Heart right ventricle (tissue), 16 donors: ENCODE measurements at regions of chr10 and their contacts with region 1.

Region 1: GRCh38 chr10:24396398-24396797 is 187.5 kb downstream of the KIAA1217 start:
- DNase-seq: no peak
- ATAC-seq: no peak
- H3K4me3 ChIP-seq: no peak overlapping the region
- H3K27ac ChIP-seq: no peak overlapping the region
- H3K4me1 ChIP-seq: no peaks in the 10 kb centered on the region
- H3K27me3 ChIP-seq: no peaks in the 10 kb centered on the region
- CTCF ChIP-seq: peak in 3 of 9 donors; percentile 13 to 39 (median 18)

Region 2: GRCh38 chr10:24238519-24239252 is 157.7 kb before region 1 on chr10:
- intact Hi-C with region 1: no loop called
- DNase-seq: no peak
- ATAC-seq: no peak
- H3K4me3 ChIP-seq: no peak overlapping the region
- H3K27ac ChIP-seq: peak overlapping the region in 1 of 10 donors; percentile 12
- H3K4me1 ChIP-seq: peaks cover 0 to 58% (median 31%) of the 10 kb centered on the region in 9 donors
- H3K27me3 ChIP-seq: no peaks in the 10 kb centered on the region
- CTCF ChIP-seq: no peak

Region 3: DNA sequence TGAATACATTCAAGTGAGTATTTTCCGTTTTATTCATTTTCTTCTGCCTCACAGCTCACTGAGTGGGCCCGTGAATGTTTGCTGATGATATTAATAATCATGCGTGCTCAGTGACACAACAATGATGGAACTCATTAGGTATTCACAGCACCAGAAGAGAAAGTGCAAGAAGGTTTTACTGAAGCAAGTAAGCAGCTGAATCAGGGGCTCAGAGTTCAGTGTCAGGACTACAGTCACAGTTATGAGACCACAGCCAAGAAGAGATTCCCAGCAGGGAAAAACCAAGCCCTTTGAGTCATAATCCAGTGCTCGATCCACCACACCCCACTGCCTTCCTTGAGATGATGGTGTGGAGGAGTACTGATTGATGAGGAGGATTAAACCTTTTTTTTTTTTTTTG is 59.9 kb after region 1 on chr10:
- intact Hi-C with region 1: loop called in 1 of 10 experiments (anchors 10 kb)
- DNase-seq: no peak
- ATAC-seq: peak in 6 of 8 donors; percentile 22 to 87 (median 34)
- H3K4me3 ChIP-seq: no peak overlapping the region
- H3K27ac ChIP-seq: peak overlapping the region in 2 of 10 donors; percentile 23 to 68
- H3K4me1 ChIP-seq: peaks cover 0 to 65% (median 38%) of the 10 kb centered on the region in 9 donors
- H3K27me3 ChIP-seq: no peaks in the 10 kb centered on the region
- CTCF ChIP-seq: no peak

Region 4: GRCh38 chr10:24518981-24519597 is 122.7 kb after region 1 on chr10:
- intact Hi-C with region 1: loop called in 1 of 10 experiments (anchors 10 kb)
- DNase-seq: peak; percentile 18 to 75
- ATAC-seq: peak; percentile 21 to 77 (median 68)
- H3K4me3 ChIP-seq: no peak overlapping the region
- H3K27ac ChIP-seq: peak overlapping the region in 2 of 10 donors; percentile 2 to 10
- H3K4me1 ChIP-seq: peaks cover 0 to 11% (median 6%) of the 10 kb centered on the region in 9 donors
- H3K27me3 ChIP-seq: no peaks in the 10 kb centered on the region
- CTCF ChIP-seq: peak; percentile 69 to 85 (median 75)